ENCODE measurements at regions of chr2 and their contacts with region 1.

Region 1: GRCh38 chr2:207529330-207530159 is at the start of gene CREB1:
- DNase-seq: peak; percentile 99
- H3K4me3 ChIP-seq: peak within 1 kb of the TSS; percentile 80 to 94 (median 90)
- H3K27ac ChIP-seq: peak within 1 kb of the TSS; percentile 98 to 100 (median 98)
- H3K4me1 ChIP-seq: peaks cover 0 to 47% (median 38%) of the 10 kb centered on the region in 4 donors
- H3K27me3 ChIP-seq: no peaks in the 10 kb centered on the region
- CTCF ChIP-seq: no peak
- EP300 ChIP-seq: peak in 2 of 4 donors; percentile 57 to 91
- POLR2A ChIP-seq: peak; percentile 23 to 95
- total RNA-seq, gene CREB1: 31.3 to 52.0 (median 47.0) TPM

Region 2: GRCh38 chr2:206765242-206766056 is 764.1 kb before region 1 on chr2 and contains the starts of genes FASTKD2 and MDH1B:
- intact Hi-C with region 1: loop called (anchors 2 kb)
- DNase-seq: peak; percentile 95
- H3K4me3 ChIP-seq: peak within 1 kb of the TSS; percentile 66 to 88 (median 74)
- H3K27ac ChIP-seq: peak within 1 kb of the TSS; percentile 81 to 93 (median 87)
- H3K4me1 ChIP-seq: peaks cover 0 to 38% (median 30%) of the 10 kb centered on the region in 4 donors
- H3K27me3 ChIP-seq: no peaks in the 10 kb centered on the region
- CTCF ChIP-seq: no peak
- EP300 ChIP-seq: no peak
- POLR2A ChIP-seq: peak; percentile 42 to 43
- total RNA-seq, gene FASTKD2: 27.3 to 35.3 (median 32.0) TPM
- total RNA-seq, gene MDH1B: 1.3 to 2.2 (median 1.8) TPM

Region 3: GRCh38 chr2:207710814-207711740 is 181.5 kb after region 1 on chr2 and contains the start of gene CCNYL1:
- intact Hi-C with region 1: loop called (anchors 5 kb)
- DNase-seq: peak; percentile 100
- H3K4me3 ChIP-seq: peak within 1 kb of the TSS; percentile 77 to 98 (median 89)
- H3K27ac ChIP-seq: peak within 1 kb of the TSS; percentile 91 to 95 (median 92)
- H3K4me1 ChIP-seq: peaks cover 0 to 25% (median 21%) of the 10 kb centered on the region in 4 donors
- H3K27me3 ChIP-seq: no peaks in the 10 kb centered on the region
- CTCF ChIP-seq: peak in 3 of 4 experiments; percentile 18 to 41 (median 23)
- EP300 ChIP-seq: no peak
- POLR2A ChIP-seq: peak; percentile 38 to 69
- total RNA-seq, gene CCNYL1: 9.2 to 17.8 (median 11.5) TPM

Region 4: DNA sequence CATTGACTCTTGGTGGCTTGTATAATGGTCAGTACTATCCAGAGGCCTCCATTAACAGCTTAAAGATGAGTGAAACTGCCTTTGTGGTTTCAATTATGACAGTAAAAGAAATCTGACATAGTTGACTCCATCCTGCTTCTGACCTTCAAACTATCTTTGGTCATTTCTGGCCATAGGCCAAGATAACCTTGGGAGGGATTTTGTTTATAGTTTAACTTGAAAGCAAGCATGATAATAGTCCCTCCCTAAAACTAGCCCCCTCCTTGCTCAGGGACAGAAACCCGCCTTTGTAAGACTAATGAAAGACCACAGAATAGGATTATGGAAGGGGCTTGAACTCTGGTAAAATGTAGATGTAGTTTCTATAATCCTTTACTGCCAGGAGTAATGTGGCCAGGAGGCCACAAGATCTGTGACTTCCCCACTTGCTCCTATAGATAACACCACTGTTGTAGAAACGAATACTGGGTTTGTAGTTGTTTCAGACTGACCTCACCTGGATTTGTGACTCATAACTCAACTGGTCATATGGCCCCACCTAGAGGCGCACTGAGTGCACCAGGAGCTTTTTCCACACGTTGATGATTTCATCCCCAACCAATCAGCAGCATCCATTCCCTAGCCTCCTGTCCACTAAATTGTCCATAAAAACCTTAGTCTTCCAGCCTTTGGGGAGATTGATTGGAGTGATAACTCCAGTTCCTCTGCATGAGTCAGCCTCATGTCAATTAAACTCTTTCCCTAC is 504.4 kb after region 1 on chr2:
- intact Hi-C with region 1: loop called (anchors 5 kb)
- DNase-seq: no peak
- H3K4me3 ChIP-seq: no peak overlapping the region
- H3K27ac ChIP-seq: no peak overlapping the region
- H3K4me1 ChIP-seq: peaks cover 0 to 16% (median 0%) of the 10 kb centered on the region in 4 donors
- H3K27me3 ChIP-seq: no peaks in the 10 kb centered on the region
- CTCF ChIP-seq: peak in 2 of 4 experiments; percentile 34 to 37
- EP300 ChIP-seq: no peak
- POLR2A ChIP-seq: no peak

Region 5: DNA sequence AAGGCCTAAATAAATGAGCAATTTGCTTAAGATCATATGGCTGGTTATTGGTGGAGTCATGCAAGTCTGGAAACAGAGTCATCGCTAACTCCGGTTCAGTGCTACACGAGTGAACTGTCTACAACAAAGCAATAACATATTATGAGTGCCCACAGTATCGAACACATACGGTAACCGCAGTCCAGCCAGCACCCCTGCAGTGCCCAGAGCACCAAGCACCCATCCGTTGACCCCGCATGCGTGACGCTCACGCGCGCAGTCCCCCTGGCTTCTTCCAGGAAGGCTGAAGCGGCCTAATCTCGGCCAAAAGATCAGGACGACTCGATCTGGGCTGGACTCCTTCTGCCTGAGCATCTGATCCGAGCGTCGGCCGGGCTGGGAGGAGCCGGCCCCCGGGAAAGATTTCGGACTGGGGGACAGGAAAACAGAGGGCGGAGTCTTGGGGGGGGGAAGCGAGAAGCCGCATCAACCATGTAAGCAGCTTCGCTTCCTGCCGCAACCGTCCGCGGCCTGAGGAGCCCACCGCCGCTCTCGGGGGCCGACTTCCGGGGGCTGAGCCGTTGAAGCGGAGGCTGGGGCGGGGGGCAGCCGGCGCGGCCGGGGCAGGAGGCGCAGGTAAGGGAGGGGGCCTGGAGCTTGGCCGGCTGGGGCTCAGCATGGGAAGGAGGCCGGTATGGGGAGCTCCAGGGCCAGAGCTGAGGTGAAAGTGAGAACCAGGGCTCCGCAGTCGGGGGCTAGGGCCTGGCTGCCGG is 736.4 kb after region 1 on chr2 and contains the start of gene PIKFYVE:
- intact Hi-C with region 1: loop called (anchors 10 kb)
- DNase-seq: peak; percentile 98
- H3K4me3 ChIP-seq: peak within 1 kb of the TSS; percentile 78 to 98 (median 92)
- H3K27ac ChIP-seq: peak within 1 kb of the TSS; percentile 93 to 98 (median 96)
- H3K4me1 ChIP-seq: peaks cover 0 to 42% (median 35%) of the 10 kb centered on the region in 4 donors
- H3K27me3 ChIP-seq: no peaks in the 10 kb centered on the region
- CTCF ChIP-seq: no peak
- EP300 ChIP-seq: peak in 3 of 4 donors; percentile 22 to 82 (median 40)
- POLR2A ChIP-seq: peak; percentile 59 to 73
- total RNA-seq, gene PIKFYVE: 22.1 to 27.2 (median 22.7) TPM

Measured in sigmoid colon (tissue), 7 donors.